ENCODE measurements at regions of chr18 and their contacts with region 1.

Region 1: GRCh38 chr18:59056706-59057492 is 82.8 kb upstream of the SEC11C start:
- DNase-seq: peak; percentile 19 to 71
- ATAC-seq: peak; percentile 25 to 80
- H3K4me3 ChIP-seq: no peak overlapping the region
- H3K27ac ChIP-seq: no peak overlapping the region
- H3K4me1 ChIP-seq: peaks cover 22 to 32% of the 10 kb centered on the region in 2 donors
- H3K27me3 ChIP-seq: no peaks in the 10 kb centered on the region
- CTCF ChIP-seq: peak; percentile 55 to 92 (median 87)
- POLR2A ChIP-seq: no peak

Region 2: DNA sequence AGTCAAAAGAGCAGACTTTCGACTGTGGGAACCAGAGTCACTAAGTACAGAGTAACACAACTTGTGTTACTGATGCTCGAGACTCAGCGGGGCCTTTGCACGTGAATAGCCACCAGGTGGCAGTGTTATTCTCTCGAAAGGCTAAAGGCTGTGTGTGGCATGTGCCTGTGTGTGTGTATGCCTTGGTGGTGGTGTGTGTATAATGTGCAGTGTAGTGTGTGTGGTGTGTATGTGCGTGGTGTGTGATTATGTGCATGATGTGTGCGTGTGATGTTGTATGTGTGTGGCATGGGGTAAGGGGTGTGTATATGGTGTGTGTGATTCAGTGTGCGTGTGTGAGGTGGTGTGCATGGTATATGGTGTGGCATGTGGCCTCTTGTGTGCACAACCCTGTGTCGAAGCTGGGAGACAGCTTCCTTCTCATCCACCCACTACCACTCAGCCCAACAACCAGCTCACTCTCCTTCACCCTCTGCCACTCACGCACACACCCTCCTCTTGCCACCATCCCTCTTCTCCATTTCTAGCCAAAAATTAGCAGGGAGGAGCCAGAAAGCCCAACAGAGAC is 275.2 kb before region 1 on chr18:
- in situ Hi-C with region 1: loop called in 3 of 4 experiments (anchors 5 kb)
- intact Hi-C with region 1: loop called (anchors 1 kb)
- DNase-seq: peak; percentile 64 to 74
- ATAC-seq: peak; percentile 87
- H3K4me3 ChIP-seq: no peak overlapping the region
- H3K27ac ChIP-seq: no peak overlapping the region
- H3K4me1 ChIP-seq: peaks cover 4 to 12% of the 10 kb centered on the region in 2 donors
- H3K27me3 ChIP-seq: no peaks in the 10 kb centered on the region
- CTCF ChIP-seq: peak; percentile 91 to 95 (median 92)
- POLR2A ChIP-seq: no peak

Region 3: DNA sequence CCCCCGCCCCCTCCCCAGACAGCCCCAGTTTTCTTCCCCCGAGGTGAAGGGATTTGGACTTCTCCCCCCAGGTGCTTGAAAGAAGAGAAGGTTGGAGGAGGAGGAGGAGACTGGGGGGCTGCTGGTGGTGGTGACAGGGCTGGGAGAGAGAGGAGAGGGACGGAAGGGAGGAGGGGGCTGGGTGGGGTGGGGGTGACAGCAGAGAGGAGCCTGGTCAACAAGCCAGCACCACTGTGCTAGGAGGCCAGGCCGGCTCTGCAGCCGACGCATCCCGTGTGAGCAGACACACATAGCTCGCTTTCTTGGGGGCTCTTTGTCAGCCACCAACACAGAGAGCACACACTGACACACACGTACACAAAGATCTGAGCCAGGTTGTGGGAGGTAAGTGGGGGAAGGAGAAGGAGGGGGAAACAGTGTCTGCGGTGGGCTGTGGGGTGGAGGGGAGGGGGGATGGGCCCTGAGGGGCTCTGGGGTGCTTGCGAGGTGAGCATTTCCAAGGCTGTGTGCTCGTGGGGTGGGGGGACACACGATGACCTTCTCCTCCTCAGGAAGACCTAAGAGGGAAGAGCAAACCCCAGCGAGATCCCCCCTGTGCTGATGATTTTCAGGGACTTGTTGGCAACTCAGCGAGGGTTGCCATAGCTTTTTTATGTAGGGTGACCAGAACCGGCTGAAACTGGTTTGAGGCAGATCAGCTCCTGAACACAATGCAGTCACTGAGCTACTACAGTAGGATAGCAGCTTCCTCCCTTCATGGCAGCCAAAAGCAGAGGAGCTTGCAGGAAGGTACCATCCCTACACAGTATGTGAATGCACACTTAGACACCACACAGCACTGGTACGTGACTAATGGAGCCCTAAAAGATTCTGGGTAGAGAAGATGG is 192.5 kb before region 1 on chr18 and contains the start of gene ZNF532:
- in situ Hi-C with region 1: no loop called
- intact Hi-C with region 1: loop called (anchors 5 kb)
- DNase-seq: no peak
- ATAC-seq: peak; percentile 7 to 15
- H3K4me3 ChIP-seq: peak within 1 kb of the TSS; percentile 61 to 69 (median 66)
- H3K27ac ChIP-seq: peak within 1 kb of the TSS; percentile 93 to 97 (median 96)
- H3K4me1 ChIP-seq: peaks cover 80 to 89% of the 10 kb centered on the region in 2 donors
- H3K27me3 ChIP-seq: no peaks in the 10 kb centered on the region
- CTCF ChIP-seq: no peak
- POLR2A ChIP-seq: no peak
- total RNA-seq, gene ZNF532: 54.7 to 124 (median 91.2) TPM

Region 4: GRCh38 chr18:58911766-58912165 is 145.1 kb before region 1 on chr18:
- in situ Hi-C with region 1: no loop called
- intact Hi-C with region 1: loop called (anchors 5 kb)
- DNase-seq: peak in 1 of 2 donors; percentile 36
- ATAC-seq: peak; percentile 51 to 73
- H3K4me3 ChIP-seq: peak overlapping the region; percentile 4 to 21 (median 10)
- H3K27ac ChIP-seq: peak overlapping the region; percentile 65 to 79 (median 76)
- H3K4me1 ChIP-seq: peaks cover 42 to 75% of the 10 kb centered on the region in 2 donors
- H3K27me3 ChIP-seq: no peaks in the 10 kb centered on the region
- CTCF ChIP-seq: no peak
- POLR2A ChIP-seq: no peak

Region 5: GRCh38 chr18:58991167-58991798 is 65.6 kb before region 1 on chr18:
- in situ Hi-C with region 1: loop called in 1 of 4 experiments (anchors 10 kb)
- intact Hi-C with region 1: loop called (anchors 2 kb)
- DNase-seq: peak in 1 of 2 donors; percentile 50
- ATAC-seq: peak; percentile 70 to 73
- H3K4me3 ChIP-seq: peak overlapping the region in 2 of 4 donors; percentile 2 to 18
- H3K27ac ChIP-seq: peak overlapping the region; percentile 88 to 92 (median 90)
- H3K4me1 ChIP-seq: peaks cover 41 to 55% of the 10 kb centered on the region in 2 donors
- H3K27me3 ChIP-seq: no peaks in the 10 kb centered on the region
- CTCF ChIP-seq: peak in 4 of 5 experiments; percentile 35 to 50 (median 42)
- POLR2A ChIP-seq: no peak

Measured in gastrocnemius medialis (tissue), 4 donors.